Mammary epithelial cell (primary cell): ENCODE measurements at regions of chr1 and their contacts with region 1.

Region 1: GRCh38 chr1:50968158-50968820 is 1.8 kb upstream of the CDKN2C start:
- DNase-seq: peak; percentile 90
- H3K4me3 ChIP-seq: peak overlapping the region; percentile 89 to 92 (median 90)
- H3K27ac ChIP-seq: peak overlapping the region; percentile 74
- H3K4me1 ChIP-seq: peaks cover 9% of the 10 kb centered on the region
- H3K27me3 ChIP-seq: no peaks in the 10 kb centered on the region
- CTCF ChIP-seq: peak in 1 of 2 donors; percentile 46

Region 2: GRCh38 chr1:50774759-50775351 is 193.4 kb before region 1 on chr1:
- CTCF ChIA-PET with region 1: no interaction called
- dilution Hi-C with region 1: no loop called
- in situ Hi-C with region 1: no loop called
- intact Hi-C with region 1: loop called (anchors 2 kb)
- DNase-seq: peak; percentile 42
- H3K4me3 ChIP-seq: no peak overlapping the region
- H3K27ac ChIP-seq: no peak overlapping the region
- H3K4me1 ChIP-seq: no peaks in the 10 kb centered on the region
- H3K27me3 ChIP-seq: no peaks in the 10 kb centered on the region
- CTCF ChIP-seq: peak; percentile 60 to 73

Region 3: DNA sequence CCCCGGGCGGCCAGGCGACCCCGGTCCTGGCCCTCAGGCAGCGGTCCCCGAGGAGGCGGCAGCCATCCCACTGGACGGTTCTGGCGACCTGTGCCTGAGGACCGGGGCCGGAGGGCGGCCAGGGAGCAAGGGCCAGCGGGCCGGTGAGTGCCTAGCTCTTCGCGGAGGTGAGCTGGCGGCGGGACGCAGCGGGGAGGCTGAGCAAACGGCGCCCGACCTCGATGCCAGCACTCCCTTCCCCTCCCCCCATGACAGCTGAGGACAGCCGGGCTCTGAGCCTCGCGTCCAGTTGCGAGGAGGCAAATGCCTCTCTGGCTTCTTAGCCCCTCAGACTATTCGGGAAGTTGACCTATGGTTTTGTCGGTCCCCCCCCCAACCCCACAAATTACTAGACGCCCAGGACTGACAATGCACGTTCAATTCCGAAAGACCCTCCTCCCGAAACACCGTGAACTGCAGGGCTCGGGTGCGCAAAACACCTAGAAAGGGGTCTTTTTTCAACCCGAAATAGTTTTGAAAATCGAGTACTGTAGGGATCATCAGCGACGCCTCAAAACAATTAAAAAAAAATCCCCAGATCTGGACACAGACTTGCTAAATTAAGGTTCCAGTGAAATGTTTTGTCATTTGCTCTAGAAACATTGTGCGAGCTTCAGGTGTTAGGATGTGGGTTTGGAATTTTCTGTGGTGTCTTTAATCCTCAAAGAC is 10.0 kb after region 1 on chr1:
- CTCF ChIA-PET with region 1: no interaction called
- dilution Hi-C with region 1: no loop called
- in situ Hi-C with region 1: no loop called
- intact Hi-C with region 1: loop called (anchors 1 kb)
- DNase-seq: peak; percentile 54
- H3K4me3 ChIP-seq: peak overlapping the region; percentile 64 to 95 (median 81)
- H3K27ac ChIP-seq: no peak overlapping the region
- H3K4me1 ChIP-seq: peaks cover 16% of the 10 kb centered on the region
- H3K27me3 ChIP-seq: no peaks in the 10 kb centered on the region
- CTCF ChIP-seq: no peak

Region 4: DNA sequence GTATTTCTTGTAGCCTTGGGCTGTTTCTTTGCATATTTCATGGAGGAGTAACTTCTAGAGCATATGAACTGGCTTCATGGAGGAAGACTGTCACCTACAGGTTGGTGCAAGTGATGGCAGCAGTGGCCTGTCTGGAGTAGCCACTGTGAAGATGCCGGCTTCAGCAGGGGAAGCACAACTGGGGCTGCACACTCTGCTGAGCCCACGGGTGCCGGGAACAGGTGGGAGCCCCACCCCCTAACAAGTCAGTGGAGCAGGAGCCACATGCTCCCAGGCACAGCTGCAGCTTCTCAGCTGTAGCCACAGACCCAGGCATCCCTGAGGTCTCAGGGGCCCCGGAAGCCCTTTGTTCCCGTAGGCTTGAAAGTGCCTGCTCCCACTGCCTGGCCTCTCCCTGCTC is 90.6 kb after region 1 on chr1:
- CTCF ChIA-PET with region 1: no interaction called
- dilution Hi-C with region 1: no loop called
- in situ Hi-C with region 1: no loop called
- intact Hi-C with region 1: loop called (anchors 5 kb)
- DNase-seq: peak; percentile 10
- H3K4me3 ChIP-seq: no peak overlapping the region
- H3K27ac ChIP-seq: no peak overlapping the region
- H3K4me1 ChIP-seq: peaks cover 30% of the 10 kb centered on the region
- H3K27me3 ChIP-seq: no peaks in the 10 kb centered on the region
- CTCF ChIP-seq: peak; percentile 50 to 61

Region 5: GRCh38 chr1:51139474-51139873 is 171.2 kb after region 1 on chr1:
- CTCF ChIA-PET with region 1: no interaction called
- dilution Hi-C with region 1: no loop called
- in situ Hi-C with region 1: no loop called
- intact Hi-C with region 1: loop called (anchors 2 kb)
- DNase-seq: no peak
- H3K4me3 ChIP-seq: no peak overlapping the region
- H3K27ac ChIP-seq: no peak overlapping the region
- H3K4me1 ChIP-seq: no peaks in the 10 kb centered on the region
- H3K27me3 ChIP-seq: no peaks in the 10 kb centered on the region
- CTCF ChIP-seq: peak; percentile 1 to 10